Lower lobe of right lung (tissue), 2 donors: ENCODE measurements at regions of chr7 and their contacts with region 1.

Region 1: GRCh38 chr7:135801045-135801693 is 52.6 kb upstream of the FAM180A start:
- DNase-seq: no peak
- ATAC-seq: peak; percentile 46 to 75
- H3K4me3 ChIP-seq: no peak overlapping the region
- H3K27ac ChIP-seq: no peak overlapping the region
- H3K4me1 ChIP-seq: peaks cover 5% of the 10 kb centered on the region
- H3K27me3 ChIP-seq: peaks cover 8% of the 10 kb centered on the region
- CTCF ChIP-seq: peak; percentile 78

Region 2: DNA sequence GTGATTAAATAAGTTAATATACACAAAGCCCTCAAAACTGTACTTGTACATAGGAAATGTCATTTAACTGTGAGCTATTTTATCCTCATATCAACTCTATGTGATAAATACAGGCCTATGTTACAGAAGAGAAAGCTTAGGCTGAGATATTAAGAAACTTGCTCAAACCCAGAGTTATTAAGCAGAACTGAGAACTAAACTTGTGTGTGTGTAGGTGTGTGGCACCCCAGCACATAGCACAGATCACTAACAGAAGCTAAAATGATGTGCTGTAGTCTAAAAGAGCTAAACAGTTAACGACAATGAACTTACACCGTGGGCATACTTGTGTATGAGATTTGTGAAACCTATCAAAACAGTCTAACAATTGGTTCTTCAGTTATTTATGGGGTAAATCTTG is 141.4 kb after region 1 on chr7:
- intact Hi-C with region 1: no loop called
- DNase-seq: no peak
- ATAC-seq: no peak
- H3K4me3 ChIP-seq: no peak overlapping the region
- H3K27ac ChIP-seq: no peak overlapping the region
- H3K4me1 ChIP-seq: peaks cover 11% of the 10 kb centered on the region
- H3K27me3 ChIP-seq: no peaks in the 10 kb centered on the region
- CTCF ChIP-seq: no peak

Region 3: DNA sequence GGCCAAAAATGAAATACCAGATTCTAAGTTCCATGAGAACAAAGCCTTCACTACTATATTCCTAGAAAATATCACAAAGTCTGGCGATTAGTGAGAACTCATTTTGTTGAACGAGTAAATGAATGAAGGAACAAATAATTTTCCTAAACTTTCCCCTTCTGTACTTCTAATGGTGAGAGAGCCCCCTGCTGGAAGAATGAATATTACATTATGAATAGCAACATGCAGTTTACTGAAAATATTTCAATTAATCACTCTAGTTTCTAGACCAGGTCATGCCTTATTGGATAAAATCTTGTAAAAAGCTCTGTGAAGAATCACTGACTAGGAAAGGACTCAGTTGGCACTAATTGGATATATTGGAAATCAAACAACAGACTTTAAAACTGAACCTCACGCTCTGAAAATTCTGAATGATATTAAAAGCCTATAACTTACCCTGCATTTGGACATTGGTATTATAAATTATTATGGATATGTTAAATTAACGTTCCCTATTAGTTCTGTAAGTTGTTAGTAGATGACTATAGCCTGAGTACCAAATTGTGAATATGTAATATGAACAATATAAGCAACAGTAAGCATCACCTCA is 208.4 kb after region 1 on chr7:
- intact Hi-C with region 1: loop called (anchors 5 kb)
- DNase-seq: no peak
- ATAC-seq: peak in 1 of 2 donors; percentile 46
- H3K4me3 ChIP-seq: no peak overlapping the region
- H3K27ac ChIP-seq: no peak overlapping the region
- H3K4me1 ChIP-seq: no peaks in the 10 kb centered on the region
- H3K27me3 ChIP-seq: no peaks in the 10 kb centered on the region
- CTCF ChIP-seq: peak; percentile 73